H1 (cell line): ENCODE measurements at regions of chr18 and their contacts with region 1.

Region 1: GRCh38 chr18:50662177-50662576 is 102.3 kb downstream of the MAPK4 start:
- DNase-seq: no peak
- H3K4me3 ChIP-seq: no peak overlapping the region
- H3K27ac ChIP-seq: no peak overlapping the region
- H3K4me1 ChIP-seq: peaks cover 0 to 3% (median 0%) of the 10 kb centered on the region in 4 experiments; a peak in 1 of 7 replicates
- H3K27me3 ChIP-seq: no peaks in the 10 kb centered on the region; a peak in 1 of 7 replicates
- CTCF ChIP-seq: peak in 2 of 3 experiments; percentile 64 to 76; a peak in 3 of 4 replicates
- EP300 ChIP-seq: no peak
- POLR2A ChIP-seq: no peak
- RAD21 ChIP-seq: peak; percentile 77 to 80

Region 2: GRCh38 chr18:50611529-50611941 is 50.6 kb before region 1 on chr18:
- CTCF ChIA-PET with region 1: interaction called, 10 read pairs
- POLR2A ChIA-PET with region 1: no interaction called
- DNase-seq: no peak
- H3K4me3 ChIP-seq: no peak overlapping the region
- H3K27ac ChIP-seq: no peak overlapping the region
- H3K4me1 ChIP-seq: no peaks in the 10 kb centered on the region
- H3K27me3 ChIP-seq: no peaks in the 10 kb centered on the region
- CTCF ChIP-seq: no peak
- EP300 ChIP-seq: no peak
- POLR2A ChIP-seq: no peak
- RAD21 ChIP-seq: no peak

Region 3: DNA sequence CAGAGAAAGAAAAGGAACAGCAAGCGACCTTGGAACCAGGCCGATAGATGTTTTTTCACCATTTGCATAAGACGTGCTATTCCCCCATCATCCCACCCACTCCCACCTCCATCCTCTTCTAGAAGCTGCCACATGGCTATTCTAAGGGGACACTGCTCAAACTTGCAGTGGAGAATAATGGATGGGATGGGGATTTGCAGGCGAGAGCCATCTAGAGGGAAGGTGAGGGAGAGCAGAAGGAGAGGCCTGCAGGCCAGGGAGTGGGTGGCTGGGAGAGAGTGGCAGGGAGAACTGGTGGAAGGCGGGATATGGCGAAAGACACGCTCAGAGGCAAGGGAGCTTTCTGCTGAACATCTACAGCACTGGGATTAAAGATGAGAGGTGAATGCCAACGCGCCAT is 17.4 kb before region 1 on chr18:
- CTCF ChIA-PET with region 1: interaction called, 56 read pairs
- POLR2A ChIA-PET with region 1: no interaction called
- DNase-seq: peak; percentile 56 to 61
- H3K4me3 ChIP-seq: no peak overlapping the region
- H3K27ac ChIP-seq: no peak overlapping the region
- H3K4me1 ChIP-seq: no peaks in the 10 kb centered on the region; a peak in 1 of 7 replicates
- H3K27me3 ChIP-seq: no peaks in the 10 kb centered on the region
- CTCF ChIP-seq: peak; percentile 74 to 89 (median 78)
- EP300 ChIP-seq: no peak
- POLR2A ChIP-seq: no peak
- RAD21 ChIP-seq: peak; percentile 64 to 70

Region 4: DNA sequence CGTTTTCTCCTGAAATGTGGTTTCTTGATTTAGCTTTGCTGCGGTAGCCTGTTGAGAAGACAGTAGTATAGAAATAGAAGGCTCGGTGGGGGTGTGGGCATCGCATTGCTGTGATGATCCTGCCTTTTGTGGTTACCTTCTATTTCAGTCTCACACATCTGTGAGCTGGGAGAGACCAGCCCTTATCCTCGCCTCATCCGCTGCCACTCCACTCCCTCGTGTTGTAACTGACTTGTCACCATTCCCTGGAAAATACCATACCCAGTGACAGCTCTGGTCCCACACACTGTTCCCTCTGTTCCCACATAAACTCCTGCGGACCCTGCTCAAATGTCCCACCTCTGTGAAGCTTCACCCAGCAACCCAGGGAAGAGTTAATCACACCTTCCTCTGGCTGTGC is 12.1 kb after region 1 on chr18:
- CTCF ChIA-PET with region 1: interaction called, 32 read pairs
- POLR2A ChIA-PET with region 1: interaction called, 3 read pairs
- DNase-seq: no peak
- H3K4me3 ChIP-seq: no peak overlapping the region
- H3K27ac ChIP-seq: no peak overlapping the region
- H3K4me1 ChIP-seq: no peaks in the 10 kb centered on the region
- H3K27me3 ChIP-seq: no peaks in the 10 kb centered on the region
- CTCF ChIP-seq: no peak
- EP300 ChIP-seq: no peak
- POLR2A ChIP-seq: no peak
- RAD21 ChIP-seq: no peak

Region 5: DNA sequence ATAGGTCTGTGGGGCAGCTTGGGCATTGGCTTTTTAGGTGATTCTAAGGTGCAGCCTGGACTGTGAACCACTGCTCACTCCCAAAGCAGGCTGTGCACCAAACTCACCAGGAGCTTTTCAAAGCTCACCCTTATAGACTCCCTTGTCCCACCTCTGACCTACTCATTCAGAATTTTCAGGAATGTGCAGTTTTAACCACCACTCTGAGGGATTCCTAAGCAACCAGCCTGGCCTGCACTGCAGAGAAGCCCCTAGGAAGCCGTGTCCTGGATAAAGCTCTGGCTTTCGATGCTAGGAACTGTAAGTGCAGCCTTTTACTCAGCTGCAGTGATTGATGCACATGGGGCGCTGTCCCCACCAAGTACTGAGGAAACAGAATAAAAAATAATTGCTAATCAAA is 124.7 kb after region 1 on chr18:
- CTCF ChIA-PET with region 1: interaction called, 25 read pairs
- POLR2A ChIA-PET with region 1: interaction called, 3 read pairs
- DNase-seq: no peak
- H3K4me3 ChIP-seq: no peak overlapping the region
- H3K27ac ChIP-seq: no peak overlapping the region
- H3K4me1 ChIP-seq: peaks cover 0 to 3% (median 0%) of the 10 kb centered on the region in 4 experiments; a peak in 1 of 7 replicates
- H3K27me3 ChIP-seq: no peaks in the 10 kb centered on the region
- CTCF ChIP-seq: no peak
- EP300 ChIP-seq: no peak
- POLR2A ChIP-seq: no peak
- RAD21 ChIP-seq: no peak